Dorsolateral prefrontal cortex (tissue), 120 donors: ENCODE measurements at regions of chr11 and their contacts with region 1.

Region 1: DNA sequence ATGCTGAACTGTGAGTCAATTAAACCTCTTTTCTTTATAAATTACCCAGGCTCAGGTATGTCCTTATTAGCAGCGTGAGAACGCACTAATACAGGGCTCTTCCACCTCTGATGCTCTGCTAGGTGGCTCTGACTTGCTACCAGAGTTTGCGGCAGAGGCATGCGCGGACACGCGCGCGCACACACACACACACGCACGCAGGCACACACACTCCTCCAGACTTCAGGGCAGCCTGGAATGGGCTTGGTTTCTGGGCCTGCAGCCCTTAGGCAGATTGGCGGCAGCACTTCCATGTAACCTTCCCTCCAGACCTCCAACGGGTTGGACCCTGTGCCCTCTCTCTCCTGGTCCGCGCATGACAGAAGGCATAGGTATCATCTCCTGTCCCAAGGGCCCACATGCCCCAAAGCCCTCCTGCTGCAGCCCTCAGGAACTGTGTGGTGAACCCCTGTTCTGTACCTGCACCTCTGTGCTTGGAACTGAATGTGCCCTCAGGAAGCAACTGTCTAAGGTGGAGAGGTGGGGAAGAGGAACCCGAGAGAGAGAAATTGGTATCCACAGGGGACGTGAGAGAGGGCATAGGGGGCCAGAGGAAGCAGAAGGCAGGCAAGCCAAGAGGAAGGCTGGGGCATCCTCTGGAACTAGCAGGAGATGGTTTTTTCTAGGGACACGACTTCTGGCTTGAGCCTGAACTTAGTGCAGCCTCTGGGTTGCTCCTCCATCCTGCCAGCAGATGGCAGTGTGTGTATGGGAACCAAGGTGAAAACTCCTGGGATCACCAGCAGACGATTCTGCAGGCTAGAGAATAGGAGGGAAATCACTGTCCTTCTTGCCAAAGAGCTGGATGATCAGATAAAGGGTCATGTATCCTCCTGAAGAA is 23.4 kb upstream of the RIC3 start:
- DNase-seq: peak; percentile 62 to 86 (median 74)
- H3K4me3 ChIP-seq: no peak overlapping the region
- H3K27ac ChIP-seq: no peak overlapping the region
- H3K27me3 ChIP-seq: peaks cover 0 to 4% (median 0%) of the 10 kb centered on the region in 45 donors
- CTCF ChIP-seq: peak; percentile 36 to 95 (median 90)

Region 2: DNA sequence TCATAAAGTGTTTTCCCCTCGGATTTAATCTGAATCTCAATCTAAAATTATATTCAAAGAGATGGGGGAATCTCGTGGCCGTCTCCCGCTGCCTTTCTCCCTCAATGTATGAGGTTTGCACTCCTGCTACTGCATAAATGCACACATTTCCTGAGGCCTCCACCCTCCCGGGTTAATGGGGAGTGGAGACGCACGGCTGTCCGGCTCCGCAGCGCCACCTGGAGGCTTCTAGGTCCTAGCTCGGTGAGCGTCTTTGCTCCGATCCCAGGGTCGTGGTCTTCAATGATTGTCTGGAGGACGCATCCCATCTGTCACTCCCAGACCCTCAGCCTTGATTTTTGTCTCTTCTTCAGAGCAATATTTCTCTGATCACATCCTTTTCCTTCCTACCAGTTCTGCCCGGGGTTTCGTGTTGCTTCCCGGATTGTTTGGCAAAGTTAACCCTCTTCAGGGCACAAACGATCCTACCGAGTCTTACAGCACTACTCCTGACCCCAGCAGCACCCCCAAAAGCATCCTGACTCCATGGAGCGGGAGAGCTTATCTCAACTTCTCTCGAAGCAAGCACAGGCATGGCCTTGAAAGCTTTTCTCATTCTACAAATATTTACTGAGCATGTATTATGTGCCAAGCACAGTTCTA is 71.6 kb after region 1 on chr11 and contains the start of gene LMO1:
- intact Hi-C with region 1: loop called in 1 of 2 experiments (anchors 2 kb)
- DNase-seq: peak; percentile 69 to 90 (median 84)
- H3K4me3 ChIP-seq: peak within 1 kb of the TSS; percentile 29 to 78 (median 63)
- H3K27ac ChIP-seq: peak within 1 kb of the TSS in 7 of 59 donors; percentile 13 to 61 (median 30)
- H3K27me3 ChIP-seq: peaks cover 0 to 52% (median 28%) of the 10 kb centered on the region in 45 donors
- CTCF ChIP-seq: peak; percentile 67 to 95 (median 88)
- total RNA-seq, gene LMO1: 0.53 to 6.6 (median 3.0) TPM

Region 3: GRCh38 chr11:8429483-8429882 is 237.2 kb after region 1 on chr11:
- intact Hi-C with region 1: no loop called
- DNase-seq: no peak
- H3K4me3 ChIP-seq: no peak overlapping the region
- H3K27ac ChIP-seq: no peak overlapping the region
- H3K27me3 ChIP-seq: no peaks in the 10 kb centered on the region
- CTCF ChIP-seq: no peak

Region 4: DNA sequence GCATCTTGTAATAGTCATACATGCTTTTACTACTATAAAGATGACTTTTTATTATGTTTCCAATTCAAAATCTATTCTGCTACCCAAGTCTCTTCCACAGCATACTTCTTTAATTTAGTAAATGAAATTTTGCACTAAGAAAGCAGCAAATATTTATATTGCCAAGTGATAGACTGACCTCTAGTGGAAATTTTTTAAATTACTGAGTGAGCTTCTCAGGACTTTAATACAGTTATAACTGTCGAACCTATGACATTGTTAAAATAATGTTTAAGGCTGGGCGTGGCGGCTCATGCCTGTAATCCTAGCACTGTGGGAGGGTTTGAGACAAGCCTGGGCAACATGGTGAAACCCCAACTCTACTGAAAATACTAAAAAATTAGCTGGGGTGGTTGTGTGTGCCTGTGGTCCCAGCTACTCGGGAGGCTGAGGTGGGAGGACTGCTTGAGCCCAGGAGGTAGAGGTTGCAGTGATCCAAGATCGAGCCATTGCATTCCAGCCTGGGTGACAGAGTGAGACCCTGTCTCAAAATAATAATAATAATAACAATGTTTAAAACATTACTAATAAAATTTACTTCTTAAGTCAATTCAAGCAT is 374.5 kb after region 1 on chr11:
- intact Hi-C with region 1: loop called (anchors 2 to 5 kb)
- DNase-seq: no peak
- H3K4me3 ChIP-seq: no peak overlapping the region
- H3K27ac ChIP-seq: no peak overlapping the region
- H3K27me3 ChIP-seq: peaks cover 0 to 3% (median 0%) of the 10 kb centered on the region in 45 donors
- CTCF ChIP-seq: peak; percentile 60 to 95 (median 81)

Region 5: GRCh38 chr11:8800520-8801110 is 608.4 kb after region 1 on chr11:
- intact Hi-C with region 1: no loop called
- DNase-seq: no peak
- H3K4me3 ChIP-seq: no peak overlapping the region
- H3K27ac ChIP-seq: peak overlapping the region in 2 of 59 donors; percentile 4 to 19
- H3K27me3 ChIP-seq: no peaks in the 10 kb centered on the region
- CTCF ChIP-seq: no peak